ENCODE measurements at regions of chr4 and their contacts with region 1.

Region 1: GRCh38 chr4:174365018-174365587 is 81.4 kb downstream of the CEP44 start:
- DNase-seq: no peak
- H3K4me3 ChIP-seq: no peak overlapping the region
- H3K27ac ChIP-seq: no peak overlapping the region
- H3K4me1 ChIP-seq: no peaks in the 10 kb centered on the region
- H3K27me3 ChIP-seq: no peaks in the 10 kb centered on the region
- CTCF ChIP-seq: peak; percentile 3 to 51

Region 2: GRCh38 chr4:174538123-174538875 is 173.2 kb after region 1 on chr4:
- intact Hi-C with region 1: no loop called
- DNase-seq: no peak
- H3K4me3 ChIP-seq: no peak overlapping the region
- H3K27ac ChIP-seq: no peak overlapping the region
- H3K4me1 ChIP-seq: no peaks in the 10 kb centered on the region
- H3K27me3 ChIP-seq: no peaks in the 10 kb centered on the region
- CTCF ChIP-seq: no peak

Region 3: DNA sequence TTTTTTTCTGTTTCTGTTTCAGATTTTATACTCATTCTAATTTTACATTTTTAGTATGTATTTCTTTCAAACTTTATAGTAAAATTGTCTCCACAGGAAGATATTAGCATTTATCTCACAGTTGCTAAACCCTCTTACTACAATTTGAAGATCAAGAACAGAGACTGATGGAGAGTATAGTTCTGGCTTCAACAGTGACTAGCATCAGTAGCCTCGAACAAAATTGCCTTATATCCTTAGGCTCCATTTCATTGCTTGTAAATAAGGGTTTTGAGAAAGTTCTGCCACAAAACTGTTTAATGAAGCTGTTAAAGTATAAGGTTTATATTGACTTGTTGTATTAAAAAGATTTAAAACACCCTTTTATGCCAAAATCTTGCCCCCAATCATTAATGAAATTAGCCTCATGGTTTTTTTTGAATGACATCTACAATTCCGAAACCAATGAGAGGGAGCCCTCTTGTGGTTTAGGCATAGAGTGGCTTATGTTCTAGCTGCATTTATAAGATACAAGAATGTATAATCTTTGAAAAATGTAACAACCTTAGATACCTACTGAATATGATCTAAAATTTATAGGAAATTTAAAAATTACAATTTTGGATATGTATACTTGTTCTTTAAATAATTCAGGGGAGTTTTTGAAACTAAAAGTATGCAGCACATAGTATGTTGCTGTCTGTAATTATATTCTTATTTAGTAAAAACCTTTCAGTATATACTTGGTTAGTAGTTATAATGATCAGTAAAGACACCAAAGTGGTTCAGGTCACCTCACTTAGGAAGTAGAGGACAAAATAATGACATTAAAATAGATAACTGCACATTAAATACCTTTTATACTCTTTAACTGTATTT is 267.0 kb after region 1 on chr4:
- intact Hi-C with region 1: loop called (anchors 5 kb)
- DNase-seq: no peak
- H3K4me3 ChIP-seq: no peak overlapping the region
- H3K27ac ChIP-seq: no peak overlapping the region
- H3K4me1 ChIP-seq: no peaks in the 10 kb centered on the region
- H3K27me3 ChIP-seq: no peaks in the 10 kb centered on the region
- CTCF ChIP-seq: peak; percentile 67 to 76

Region 4: GRCh38 chr4:175906381-175906780 is 1541.3 kb after region 1 on chr4:
- intact Hi-C with region 1: no loop called
- DNase-seq: no peak
- H3K4me3 ChIP-seq: no peak overlapping the region
- H3K27ac ChIP-seq: no peak overlapping the region
- H3K4me1 ChIP-seq: no peaks in the 10 kb centered on the region
- H3K27me3 ChIP-seq: no peaks in the 10 kb centered on the region
- CTCF ChIP-seq: no peak

Measured in tibial artery (tissue), 4 donors.